Left cardiac atrium (tissue), 4 donors: ENCODE measurements at regions of chr3 and their contacts with region 1.

Region 1: DNA sequence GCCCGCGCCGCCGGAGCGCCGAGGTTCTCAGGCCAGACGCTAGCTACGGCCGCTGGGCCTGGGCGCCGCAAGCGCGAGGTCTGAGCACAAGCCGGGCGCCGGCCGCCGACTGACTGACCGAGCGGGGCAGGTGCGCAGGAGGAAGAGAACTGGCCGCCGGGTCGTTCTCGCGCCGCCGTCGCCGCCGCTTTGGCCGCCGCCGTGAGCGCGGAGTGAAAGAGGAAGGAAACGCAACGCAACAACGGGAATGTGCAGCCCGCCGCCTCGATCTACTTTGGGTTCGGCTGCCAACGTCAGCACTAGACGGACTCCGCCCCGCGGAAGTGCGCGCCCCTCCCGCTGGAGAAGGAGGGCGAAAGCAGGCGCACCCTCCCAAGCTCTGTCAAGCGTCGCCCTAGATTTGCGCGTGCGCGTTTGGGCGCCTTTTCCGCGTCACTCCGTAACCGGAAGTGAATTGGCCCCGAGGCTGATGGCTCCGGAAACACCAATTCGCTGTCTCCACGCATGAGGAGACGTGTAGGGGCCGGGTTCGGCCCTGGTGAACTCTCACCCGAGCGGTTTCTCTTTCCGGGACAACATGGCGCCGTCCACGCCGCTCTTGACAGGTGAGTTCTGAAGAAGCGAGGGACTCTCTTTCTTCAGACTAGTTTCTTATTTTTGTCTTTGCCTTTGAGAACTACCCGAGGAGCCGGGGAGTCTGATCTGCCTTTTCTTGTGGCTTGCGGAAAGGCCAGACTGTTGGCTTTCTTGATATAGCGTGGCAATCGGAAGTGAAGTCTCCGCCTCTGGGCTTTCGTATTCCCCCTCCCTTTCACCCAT is at the starts of genes EIF2A and SERP1:
- DNase-seq: peak; percentile 99
- ATAC-seq: peak; percentile 97
- total RNA-seq, gene EIF2A: 54.5 to 76.6 TPM
- total RNA-seq, gene SERP1: 42.4 to 47.2 TPM

Region 2: DNA sequence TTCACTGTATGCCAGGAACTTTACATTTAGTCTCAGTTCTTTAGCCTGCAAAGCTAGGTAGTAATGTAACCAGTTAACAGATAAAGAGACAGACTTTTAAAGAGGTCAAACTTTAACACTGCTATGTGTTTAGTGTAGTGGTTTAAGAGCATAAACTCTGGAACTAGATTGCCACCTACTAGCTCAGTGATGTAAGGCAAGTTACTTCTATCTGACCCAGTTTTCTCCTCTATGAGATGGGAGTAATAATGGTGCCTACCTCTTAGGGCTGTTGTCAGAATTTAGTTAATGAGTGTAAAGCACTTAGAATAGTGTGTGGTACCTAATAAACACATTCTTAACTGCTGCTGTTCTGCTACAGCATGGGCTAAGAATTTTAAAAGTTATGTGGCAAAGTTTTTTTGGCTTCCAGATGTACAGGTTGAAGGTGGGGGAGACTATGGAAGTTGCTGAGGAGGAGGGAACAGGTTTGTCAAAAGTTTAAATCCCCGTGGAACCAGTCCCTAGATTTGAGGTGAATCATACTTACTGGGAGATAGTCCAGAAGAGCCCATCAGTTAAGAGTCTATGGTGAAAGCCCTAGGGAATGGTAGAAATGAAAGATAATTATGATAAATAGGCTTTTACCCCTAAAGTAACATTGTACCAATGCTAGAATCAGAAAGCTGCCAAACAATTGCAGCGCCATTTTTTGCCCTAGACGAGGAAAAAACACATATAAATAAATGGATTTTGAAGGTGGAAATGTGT is 124.5 kb before region 1 on chr3:
- intact Hi-C with region 1: no loop called
- DNase-seq: no peak
- ATAC-seq: peak; percentile 15 to 84

Region 3: GRCh38 chr3:150603153-150603979 is 56.9 kb after region 1 on chr3 and contains the start of gene SELENOT:
- intact Hi-C with region 1: loop called in 1 of 2 experiments (anchors 2 kb)
- DNase-seq: peak; percentile 96
- ATAC-seq: peak; percentile 95 to 96
- total RNA-seq, gene SELENOT: 86.2 to 106 TPM

Region 4: GRCh38 chr3:151047636-151048035 is 501.2 kb after region 1 on chr3:
- intact Hi-C with region 1: no loop called
- DNase-seq: no peak
- ATAC-seq: no peak